ENCODE measurements at regions of chr2 and their contacts with region 1.

Region 1: DNA sequence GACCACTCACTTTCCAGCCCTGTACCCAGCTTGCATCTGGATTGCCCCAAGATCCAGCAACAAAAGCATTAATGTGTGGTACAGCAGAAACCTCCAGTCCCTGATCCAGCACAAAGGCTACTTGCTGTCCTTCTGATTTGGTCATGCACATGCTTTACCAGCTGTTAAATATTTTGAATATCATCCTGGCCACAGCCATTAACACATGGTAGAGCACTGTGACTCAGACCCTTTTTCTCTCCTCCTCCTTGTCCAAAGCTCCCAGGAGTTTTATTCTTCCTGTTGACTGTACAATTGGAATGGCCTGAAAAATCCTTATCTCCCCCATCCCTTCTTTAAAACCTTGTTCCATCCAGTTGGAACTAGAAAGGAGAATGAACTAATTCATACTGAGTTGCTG is 419.7 kb upstream of the TNP1 start:
- DNase-seq: no peak
- ATAC-seq: peak; percentile 84 to 90 (median 88)
- H3K4me3 ChIP-seq: no peak overlapping the region
- H3K27ac ChIP-seq: peak overlapping the region; percentile 53
- H3K4me1 ChIP-seq: peaks cover 5% of the 10 kb centered on the region
- H3K27me3 ChIP-seq: no peaks in the 10 kb centered on the region
- CTCF ChIP-seq: no peak

Region 2: DNA sequence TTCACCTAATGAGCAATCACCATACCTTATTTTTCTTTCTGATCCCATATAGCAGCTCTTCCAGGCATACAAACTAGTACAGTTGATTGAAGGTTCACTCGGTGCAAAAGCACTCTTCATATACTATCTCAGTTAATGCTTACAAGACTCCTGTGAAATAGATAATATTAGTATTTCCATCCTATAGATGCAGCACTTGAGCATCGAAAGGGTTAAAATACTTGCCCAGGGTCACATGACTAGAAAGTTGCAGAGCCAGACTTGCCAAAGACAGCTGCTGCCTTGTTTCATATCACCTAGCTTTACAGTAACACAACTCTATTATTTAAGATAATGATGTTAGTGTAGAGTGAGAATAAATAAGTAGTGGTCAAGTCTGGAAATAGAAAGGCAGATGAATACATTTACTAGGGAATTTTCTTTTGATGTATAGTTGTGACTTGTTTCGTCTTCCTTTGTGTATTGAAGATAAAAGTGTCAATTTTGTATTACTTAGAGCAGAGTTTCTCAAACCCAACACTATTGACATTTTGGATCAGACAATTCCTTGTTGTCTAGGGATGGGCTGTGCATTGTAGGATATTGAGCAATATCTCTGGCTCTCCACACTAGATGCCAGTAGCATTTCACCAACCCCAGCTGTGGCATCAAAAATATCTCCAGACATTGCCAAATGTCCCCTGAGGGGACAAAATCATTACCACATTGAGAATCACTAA is 46.4 kb after region 1 on chr2:
- intact Hi-C with region 1: loop called in 1 of 2 experiments (anchors 1 kb)
- DNase-seq: no peak
- ATAC-seq: peak; percentile 44 to 86 (median 68)
- H3K4me3 ChIP-seq: no peak overlapping the region
- H3K27ac ChIP-seq: no peak overlapping the region
- H3K4me1 ChIP-seq: peaks cover 15% of the 10 kb centered on the region
- H3K27me3 ChIP-seq: no peaks in the 10 kb centered on the region
- CTCF ChIP-seq: no peak